ENCODE measurements at regions of chr5 and their contacts with region 1.

Region 1: GRCh38 chr5:134864707-134865106 is 9.5 kb upstream of the TXNDC15 start:
- DNase-seq: no peak
- H3K4me3 ChIP-seq: no peak overlapping the region
- CTCF ChIP-seq: no peak

Region 2: DNA sequence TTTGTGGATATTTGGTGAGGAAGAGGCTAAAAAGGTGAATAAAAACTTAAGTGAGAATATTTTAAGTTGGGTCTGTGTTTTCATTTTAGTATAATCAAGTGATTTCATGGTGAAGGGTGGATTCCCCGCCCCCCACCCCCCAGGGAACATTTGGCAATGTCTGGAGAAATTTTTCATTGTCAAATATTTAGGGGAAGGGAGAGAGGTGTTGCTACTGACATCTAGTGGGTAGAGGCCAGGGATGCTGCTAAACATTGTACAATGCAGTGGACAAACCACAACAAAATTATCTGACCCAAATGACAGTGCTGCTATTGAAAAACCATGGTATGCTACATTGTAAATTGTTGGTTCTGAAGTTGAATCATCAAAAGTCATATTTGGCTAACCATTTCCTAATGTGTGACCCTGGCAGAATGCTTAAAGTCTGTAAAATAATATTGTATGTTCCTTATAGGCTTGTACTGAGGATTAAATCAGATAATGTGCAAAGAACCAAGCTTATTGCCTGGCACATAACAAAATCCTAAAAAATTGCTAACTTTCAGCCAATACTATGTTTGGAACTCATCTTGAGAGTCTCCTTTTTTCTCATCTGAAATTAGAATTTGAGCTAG is 13.3 kb before region 1 on chr5:
- CTCF ChIA-PET with region 1: interaction called, 26 read pairs
- POLR2A ChIA-PET with region 1: no interaction called
- DNase-seq: no peak
- H3K4me3 ChIP-seq: no peak overlapping the region
- CTCF ChIP-seq: peak; percentile 53

Region 3: DNA sequence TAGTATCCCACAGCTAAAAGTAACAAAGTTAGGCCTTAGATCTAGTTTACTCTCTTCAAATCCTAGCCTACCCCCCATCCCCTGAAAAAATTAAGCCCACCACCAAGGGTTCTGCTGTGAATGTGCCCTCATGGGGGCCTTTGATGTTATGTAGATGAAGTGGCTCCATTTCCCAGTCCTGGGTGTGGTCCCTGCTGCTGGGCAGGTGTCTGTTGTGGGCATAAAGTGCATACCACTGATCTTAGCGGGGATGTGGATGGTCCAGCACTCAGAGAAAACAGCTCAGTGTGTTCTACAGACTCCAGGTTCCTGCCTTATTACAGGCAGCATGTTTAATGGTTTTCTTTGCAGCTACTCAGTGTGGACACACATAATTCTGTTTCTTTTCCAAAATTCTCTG is 42.1 kb after region 1 on chr5:
- CTCF ChIA-PET with region 1: no interaction called
- POLR2A ChIA-PET with region 1: no interaction called
- DNase-seq: no peak
- H3K4me3 ChIP-seq: no peak overlapping the region
- CTCF ChIP-seq: no peak

Region 4: GRCh38 chr5:134958765-134959168 is 94.1 kb after region 1 on chr5:
- CTCF ChIA-PET with region 1: no interaction called
- POLR2A ChIA-PET with region 1: no interaction called
- DNase-seq: no peak
- H3K4me3 ChIP-seq: no peak overlapping the region
- CTCF ChIP-seq: no peak